ENCODE measurements at regions of chr1 and their contacts with region 1.

Region 1: GRCh38 chr1:2314803-2315673 is 76.3 kb downstream of the MORN1 start:
- DNase-seq: peak; percentile 63
- ATAC-seq: peak; percentile 53
- H3K4me3 Mint-ChIP-seq: peak overlapping the region; percentile 20
- H3K27ac Mint-ChIP-seq: no peak overlapping the region
- H3K4me1 Mint-ChIP-seq: peaks cover 6% of the 10 kb centered on the region
- H3K27me3 Mint-ChIP-seq: no peaks in the 10 kb centered on the region

Region 2: GRCh38 chr1:2290595-2291510 is 24.2 kb before region 1 on chr1:
- CTCF ChIA-PET with region 1: interaction called, 16 read pairs
- DNase-seq: peak; percentile 93
- ATAC-seq: peak; percentile 83
- H3K4me3 Mint-ChIP-seq: peak overlapping the region; percentile 69
- H3K27ac Mint-ChIP-seq: peak overlapping the region; percentile 89
- H3K4me1 Mint-ChIP-seq: peaks cover 71% of the 10 kb centered on the region
- H3K27me3 Mint-ChIP-seq: no peaks in the 10 kb centered on the region

Region 3: DNA sequence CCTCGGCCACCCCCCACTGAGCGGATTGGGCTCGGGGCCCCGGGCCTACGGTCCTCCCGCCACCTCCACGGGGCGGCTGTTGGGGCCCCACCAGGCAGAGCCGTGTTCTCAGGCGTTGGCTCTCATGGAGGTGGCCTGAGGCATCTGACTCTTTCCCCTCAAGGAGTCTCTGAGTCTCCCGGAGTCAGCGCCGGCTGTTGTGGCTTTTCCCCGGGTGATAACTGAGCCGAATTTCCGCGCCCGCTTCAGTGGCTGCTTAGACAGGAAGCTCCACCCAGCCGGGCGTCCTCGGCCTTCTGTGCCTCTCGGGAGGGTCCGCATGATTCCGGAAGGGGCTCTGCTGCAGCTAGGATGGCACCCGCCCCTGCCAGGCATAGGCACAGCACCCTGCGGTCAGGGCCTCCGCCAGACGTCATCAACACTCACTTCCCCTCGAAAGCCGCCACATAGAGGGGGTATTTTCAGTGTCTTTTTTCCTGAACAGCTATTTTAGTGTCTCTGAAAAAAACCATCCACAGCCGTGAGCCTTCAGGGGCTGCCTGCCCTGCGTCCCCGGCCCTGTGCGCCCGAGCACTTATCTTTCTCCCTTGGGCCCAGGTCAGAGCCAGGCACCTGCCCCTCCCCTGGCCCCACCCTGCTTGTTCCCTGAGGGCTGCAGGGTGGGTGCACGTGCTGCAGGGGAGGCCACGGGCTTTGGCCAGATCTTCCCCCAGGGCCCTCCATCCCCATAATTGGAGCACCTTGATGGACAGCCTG is 14.0 kb before region 1 on chr1:
- CTCF ChIA-PET with region 1: interaction called, 24 read pairs
- DNase-seq: peak; percentile 94
- ATAC-seq: peak; percentile 77
- H3K4me3 Mint-ChIP-seq: peak overlapping the region; percentile 74
- H3K27ac Mint-ChIP-seq: peak overlapping the region; percentile 97
- H3K4me1 Mint-ChIP-seq: peaks cover 41% of the 10 kb centered on the region
- H3K27me3 Mint-ChIP-seq: no peaks in the 10 kb centered on the region

Region 4: DNA sequence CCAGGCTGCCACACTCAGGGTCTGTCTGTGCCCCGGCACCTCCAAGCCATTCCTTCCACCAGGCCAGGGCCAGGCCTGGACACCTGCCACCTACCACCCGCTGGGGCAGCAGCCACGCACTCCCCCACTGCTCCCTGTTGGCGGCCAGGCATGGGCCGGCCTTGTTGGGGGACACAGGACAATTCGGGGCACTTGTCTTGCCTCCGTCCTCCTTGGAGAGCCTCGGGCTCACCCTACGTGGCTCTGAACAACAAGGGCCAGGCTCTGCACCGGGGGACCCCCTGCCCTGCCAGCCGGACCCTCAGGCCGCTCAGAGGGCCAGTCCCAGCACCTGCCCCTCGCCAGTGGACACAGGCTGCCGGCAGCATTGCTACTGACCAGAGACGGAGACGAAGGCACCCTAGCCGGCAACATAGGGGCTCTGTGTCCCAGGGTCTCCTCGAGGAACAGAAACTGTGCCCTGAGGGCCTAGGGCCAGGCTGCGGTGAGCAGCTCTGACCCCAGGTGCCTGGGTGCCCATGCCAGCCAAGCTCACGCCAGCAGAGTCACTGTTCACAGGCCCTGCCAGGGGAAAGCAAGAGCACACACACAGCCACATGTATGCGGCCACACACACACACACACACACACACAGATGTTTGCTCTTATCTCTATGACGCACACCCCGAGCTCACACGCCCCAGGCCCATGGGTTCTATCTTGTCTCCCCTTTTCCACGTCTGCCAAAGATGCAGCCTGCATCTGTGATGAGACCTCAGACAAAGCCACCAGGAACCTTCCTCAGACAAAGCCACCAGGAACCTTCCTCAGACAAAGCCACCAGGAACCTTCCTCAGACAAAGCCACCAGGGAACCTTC is 30.4 kb after region 1 on chr1:
- CTCF ChIA-PET with region 1: no interaction called
- DNase-seq: no peak
- ATAC-seq: no peak
- H3K4me3 Mint-ChIP-seq: no peak overlapping the region
- H3K27ac Mint-ChIP-seq: no peak overlapping the region
- H3K4me1 Mint-ChIP-seq: no peaks in the 10 kb centered on the region
- H3K27me3 Mint-ChIP-seq: no peaks in the 10 kb centered on the region

Measured in activated CD8-positive, alpha-beta memory T cell treated with anti-CD3 and anti-CD28 coated beads, Interleukin-2, amount 10 ng/mL, durations not matched to agents 7 days and 5 days (primary cell).